Ascending aorta (tissue), 2 donors: ENCODE measurements at regions of chr12 and their contacts with region 1.

Region 1: DNA sequence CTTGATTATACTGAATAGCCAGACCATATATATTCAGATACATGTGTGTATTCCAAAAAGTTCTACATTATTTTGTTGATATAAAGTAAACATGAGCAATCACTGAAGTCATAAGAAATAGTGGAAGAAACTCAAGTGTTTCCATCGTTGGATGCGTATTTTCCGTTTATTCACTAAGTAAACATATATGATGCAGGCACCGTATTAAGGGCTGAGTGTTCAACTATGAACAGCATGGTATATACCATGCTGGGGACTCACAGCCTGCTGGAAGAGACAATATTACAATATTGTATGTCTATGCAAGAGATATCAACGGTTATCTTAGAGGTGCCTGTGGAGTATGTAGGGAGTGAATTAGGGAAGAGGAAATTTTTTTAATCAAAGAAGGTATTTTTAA is 1.2 kb downstream of the PYROXD1 start:
- DNase-seq: no peak
- H3K4me3 ChIP-seq: peak overlapping the region; percentile 73 to 80
- H3K27ac ChIP-seq: peak overlapping the region; percentile 84 to 88
- H3K4me1 ChIP-seq: no peaks in the 10 kb centered on the region
- H3K27me3 ChIP-seq: no peaks in the 10 kb centered on the region
- CTCF ChIP-seq: no peak

Region 2: GRCh38 chr12:21296751-21297406 is 141.8 kb before region 1 on chr12:
- intact Hi-C with region 1: loop called (anchors 2 kb)
- DNase-seq: no peak
- H3K4me3 ChIP-seq: no peak overlapping the region
- H3K27ac ChIP-seq: no peak overlapping the region
- H3K4me1 ChIP-seq: no peaks in the 10 kb centered on the region
- H3K27me3 ChIP-seq: no peaks in the 10 kb centered on the region
- CTCF ChIP-seq: peak; percentile 6 to 66 (median 59)

Region 3: GRCh38 chr12:21516281-21516680 is 77.6 kb after region 1 on chr12:
- intact Hi-C with region 1: no loop called
- DNase-seq: no peak
- H3K4me3 ChIP-seq: no peak overlapping the region
- H3K27ac ChIP-seq: no peak overlapping the region
- H3K4me1 ChIP-seq: no peaks in the 10 kb centered on the region
- H3K27me3 ChIP-seq: no peaks in the 10 kb centered on the region
- CTCF ChIP-seq: no peak